SK-N-SH (cell line): ENCODE measurements at regions of chr15 and their contacts with region 1.

Region 1: GRCh38 chr15:33700695-33701304 is 267.5 kb upstream of the CHRM5 start:
- DNase-seq: peak; percentile 66
- H3K4me3 ChIP-seq: no peak overlapping the region; a peak in 1 of 4 replicates
- H3K27ac ChIP-seq: no peak overlapping the region
- H3K4me1 ChIP-seq: peaks cover 0 to 5% of the 10 kb centered on the region in 2 experiments; a peak in 1 of 4 replicates
- H3K27me3 ChIP-seq: 0 out of 2 replicates have a peak, but pooled peaks cover 7% of the 10 kb centered on the region
- CTCF ChIP-seq: peak; percentile 96
- EP300 ChIP-seq: no peak
- RAD21 ChIP-seq: peak; percentile 94

Region 2: GRCh38 chr15:32718821-32719716 is 981.7 kb before region 1 on chr15:
- CTCF ChIA-PET with region 1: no interaction called
- POLR2A ChIA-PET with region 1: no interaction called
- DNase-seq: peak; percentile 69
- H3K4me3 ChIP-seq: peak overlapping the region; percentile 61 to 70
- H3K27ac ChIP-seq: peak overlapping the region in 1 of 2 experiments; percentile 69; a peak in 3 of 4 replicates
- H3K4me1 ChIP-seq: peaks cover 0 to 11% of the 10 kb centered on the region in 2 experiments; a peak in 1 of 4 replicates
- H3K27me3 ChIP-seq: no peaks in the 10 kb centered on the region
- CTCF ChIP-seq: no peak
- EP300 ChIP-seq: no peak
- RAD21 ChIP-seq: no peak

Region 3: DNA sequence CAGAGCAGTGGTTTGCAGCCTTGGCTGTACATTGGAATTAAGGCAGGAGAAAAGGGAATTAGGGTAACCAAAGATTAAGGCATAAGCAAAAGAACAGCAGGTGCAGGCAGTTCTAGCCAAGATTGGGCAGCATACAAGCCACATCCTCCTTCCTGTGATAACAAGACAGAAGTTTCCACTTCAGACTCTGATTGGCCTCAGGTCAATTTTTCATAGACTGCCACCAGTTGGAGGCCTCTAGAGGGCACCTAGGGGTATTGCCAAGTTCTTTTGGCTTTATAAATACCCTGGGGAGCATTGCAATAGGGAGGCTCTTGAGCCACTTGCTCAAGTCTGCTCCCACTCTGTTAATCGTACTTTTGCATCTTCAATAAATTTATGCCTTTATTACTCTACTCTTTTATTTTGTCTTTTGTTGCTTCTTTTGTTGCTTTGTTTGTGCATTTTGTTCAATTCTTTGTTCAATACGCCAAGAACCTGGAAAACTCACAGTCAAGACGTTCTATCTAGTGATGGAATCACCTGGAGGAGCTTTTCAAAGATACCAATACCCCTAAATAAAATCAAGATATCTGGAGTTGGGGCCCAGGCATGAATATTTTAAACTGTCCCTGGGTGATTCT is 474.1 kb before region 1 on chr15:
- CTCF ChIA-PET with region 1: interaction called, 24 read pairs
- POLR2A ChIA-PET with region 1: no interaction called
- DNase-seq: peak; percentile 32
- H3K4me3 ChIP-seq: no peak overlapping the region
- H3K27ac ChIP-seq: no peak overlapping the region
- H3K4me1 ChIP-seq: no peaks in the 10 kb centered on the region
- H3K27me3 ChIP-seq: no peaks in the 10 kb centered on the region
- CTCF ChIP-seq: peak; percentile 59
- EP300 ChIP-seq: no peak
- RAD21 ChIP-seq: peak; percentile 33; the same call in 1 of the 2 replicates

Region 4: GRCh38 chr15:33292717-33293307 is 408.0 kb before region 1 on chr15:
- CTCF ChIA-PET with region 1: interaction called, 182 read pairs
- POLR2A ChIA-PET with region 1: no interaction called
- DNase-seq: peak; percentile 67
- H3K4me3 ChIP-seq: no peak overlapping the region; a peak in 1 of 4 replicates
- H3K27ac ChIP-seq: no peak overlapping the region
- H3K4me1 ChIP-seq: no peaks in the 10 kb centered on the region
- H3K27me3 ChIP-seq: no peaks in the 10 kb centered on the region
- CTCF ChIP-seq: peak; percentile 90
- EP300 ChIP-seq: no peak
- RAD21 ChIP-seq: peak; percentile 87

Region 5: GRCh38 chr15:33639978-33640377 is 60.8 kb before region 1 on chr15:
- CTCF ChIA-PET with region 1: interaction called, 10 read pairs
- POLR2A ChIA-PET with region 1: interaction called, 3 read pairs
- DNase-seq: peak; percentile 74
- H3K4me3 ChIP-seq: no peak overlapping the region; a peak in 1 of 4 replicates
- H3K27ac ChIP-seq: peak overlapping the region in 1 of 2 experiments; percentile 92; a peak in 2 of 4 replicates
- H3K4me1 ChIP-seq: peaks cover 0 to 25% of the 10 kb centered on the region in 2 experiments; a peak in 2 of 4 replicates
- H3K27me3 ChIP-seq: peaks cover 11% of the 10 kb centered on the region; the same call in 1 of the 2 replicates
- CTCF ChIP-seq: no peak
- EP300 ChIP-seq: peak in 1 of 2 experiments; percentile 81; a peak in 2 of 4 replicates
- RAD21 ChIP-seq: peak; percentile 51

Region 6: DNA sequence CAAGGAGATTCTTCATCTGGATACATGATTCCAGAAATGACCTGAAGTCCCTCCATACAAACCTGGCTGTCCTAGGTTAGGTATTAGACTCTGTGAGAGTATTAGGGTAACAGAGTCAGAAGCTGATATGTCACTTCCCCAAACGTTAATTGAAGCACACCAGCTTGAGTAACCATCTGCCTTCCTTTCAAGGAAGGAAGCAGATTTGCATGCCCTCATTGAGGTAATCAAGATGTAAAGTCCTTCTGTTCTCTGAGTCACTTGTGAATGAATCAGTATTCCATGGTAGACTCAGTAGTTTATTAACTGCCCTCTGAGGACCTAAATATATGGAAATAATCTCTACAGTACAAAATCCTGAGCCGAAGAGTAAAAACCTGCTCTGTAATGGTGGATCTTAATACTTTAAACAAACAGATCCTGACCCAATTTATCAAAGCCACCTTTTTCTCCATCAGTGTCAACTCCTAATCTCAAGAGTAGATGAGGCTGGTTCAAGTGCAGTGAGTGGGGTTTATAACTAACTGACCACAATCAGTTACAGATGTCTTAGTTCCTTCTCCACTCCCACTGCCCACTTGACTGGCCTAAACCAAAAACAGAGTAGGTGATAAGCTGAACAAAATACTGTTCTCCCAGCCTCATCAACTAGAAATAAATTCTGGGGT is 21.3 kb after region 1 on chr15:
- CTCF ChIA-PET with region 1: interaction called, 20 read pairs
- POLR2A ChIA-PET with region 1: no interaction called
- DNase-seq: no peak
- H3K4me3 ChIP-seq: no peak overlapping the region
- H3K27ac ChIP-seq: peak overlapping the region in 1 of 2 experiments; percentile 89; a peak in 2 of 4 replicates
- H3K4me1 ChIP-seq: peaks cover 0 to 13% of the 10 kb centered on the region in 2 experiments; a peak in 1 of 4 replicates
- H3K27me3 ChIP-seq: no peaks in the 10 kb centered on the region
- CTCF ChIP-seq: no peak
- EP300 ChIP-seq: no peak
- RAD21 ChIP-seq: no peak

Region 7: DNA sequence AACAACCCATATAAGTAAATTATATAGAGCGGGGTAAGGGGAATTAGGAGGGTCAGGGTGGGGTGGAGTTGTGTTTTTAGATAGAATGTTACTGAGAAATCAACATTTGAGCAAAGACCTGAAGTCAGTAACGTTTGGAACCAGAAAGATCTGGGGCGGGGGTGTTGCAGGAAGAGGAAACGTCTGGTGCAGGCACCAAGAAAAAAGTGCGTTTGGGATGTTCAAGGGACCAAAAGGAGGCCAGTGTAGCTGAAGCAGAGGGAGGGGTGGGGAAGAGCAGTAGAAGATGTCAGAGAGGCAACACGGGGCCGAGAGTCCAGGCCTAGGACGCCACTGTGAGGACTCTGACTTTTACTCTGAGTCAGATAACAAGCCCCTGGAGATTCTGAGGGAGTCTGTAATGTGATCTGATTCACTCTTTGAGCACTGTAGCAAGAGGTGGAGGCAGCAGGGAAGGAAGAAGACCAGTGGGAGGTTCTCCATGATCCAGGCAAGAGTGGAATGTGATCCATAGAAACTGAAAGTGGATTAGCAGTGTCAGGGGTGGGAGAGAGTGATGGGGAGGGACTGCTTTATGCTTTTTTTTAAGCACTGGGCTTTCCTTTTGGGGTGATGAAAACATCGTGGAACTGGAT is 88.2 kb after region 1 on chr15:
- CTCF ChIA-PET with region 1: no interaction called
- POLR2A ChIA-PET with region 1: no interaction called
- DNase-seq: no peak
- H3K4me3 ChIP-seq: no peak overlapping the region
- H3K27ac ChIP-seq: no peak overlapping the region
- H3K4me1 ChIP-seq: no peaks in the 10 kb centered on the region
- H3K27me3 ChIP-seq: no peaks in the 10 kb centered on the region
- CTCF ChIP-seq: no peak
- EP300 ChIP-seq: no peak
- RAD21 ChIP-seq: no peak

Region 8: GRCh38 chr15:33872416-33873106 is 171.8 kb after region 1 on chr15:
- CTCF ChIA-PET with region 1: no interaction called
- POLR2A ChIA-PET with region 1: no interaction called
- DNase-seq: no peak
- H3K4me3 ChIP-seq: no peak overlapping the region
- H3K27ac ChIP-seq: peak overlapping the region in 1 of 2 experiments; percentile 24; a peak in 1 of 4 replicates
- H3K4me1 ChIP-seq: peaks cover 0 to 9% of the 10 kb centered on the region in 2 experiments; a peak in 1 of 4 replicates
- H3K27me3 ChIP-seq: no peaks in the 10 kb centered on the region
- CTCF ChIP-seq: no peak
- EP300 ChIP-seq: no peak
- RAD21 ChIP-seq: no peak

Region 9: DNA sequence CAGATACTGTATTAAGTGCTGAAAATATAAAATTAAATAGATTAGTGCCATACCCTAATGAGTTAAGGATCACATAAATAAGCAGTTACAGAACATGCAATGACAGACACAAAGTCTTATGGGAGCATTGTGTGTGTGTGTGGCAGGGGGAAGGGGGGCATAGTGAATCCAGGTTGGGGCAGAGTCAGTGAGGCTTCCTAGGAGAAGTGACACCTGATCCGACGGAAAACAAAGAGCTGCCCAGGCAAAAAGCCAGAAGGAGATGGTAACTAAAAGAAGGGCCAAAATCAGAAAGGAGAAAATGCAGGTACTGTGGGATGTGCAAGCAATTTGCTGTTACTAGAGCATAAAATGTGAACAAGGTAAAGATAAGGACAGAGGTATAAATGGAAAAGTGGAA is 187.4 kb after region 1 on chr15:
- CTCF ChIA-PET with region 1: no interaction called
- POLR2A ChIA-PET with region 1: no interaction called
- DNase-seq: no peak
- H3K4me3 ChIP-seq: no peak overlapping the region
- H3K27ac ChIP-seq: no peak overlapping the region
- H3K4me1 ChIP-seq: peaks cover 0 to 3% of the 10 kb centered on the region in 2 experiments; a peak in 1 of 4 replicates
- H3K27me3 ChIP-seq: no peaks in the 10 kb centered on the region
- CTCF ChIP-seq: no peak
- EP300 ChIP-seq: no peak
- RAD21 ChIP-seq: no peak